Aorta (tissue), 5 donors: ENCODE measurements at regions of chr12 and their contacts with region 1.

Region 1: GRCh38 chr12:62006076-62006732 is 254.0 kb upstream of the USP15 start:
- DNase-seq: no peak
- ATAC-seq: no peak
- H3K4me3 ChIP-seq: no peak overlapping the region
- H3K27ac ChIP-seq: no peak overlapping the region
- H3K4me1 ChIP-seq: no peaks in the 10 kb centered on the region
- H3K27me3 ChIP-seq: no peaks in the 10 kb centered on the region

Region 2: DNA sequence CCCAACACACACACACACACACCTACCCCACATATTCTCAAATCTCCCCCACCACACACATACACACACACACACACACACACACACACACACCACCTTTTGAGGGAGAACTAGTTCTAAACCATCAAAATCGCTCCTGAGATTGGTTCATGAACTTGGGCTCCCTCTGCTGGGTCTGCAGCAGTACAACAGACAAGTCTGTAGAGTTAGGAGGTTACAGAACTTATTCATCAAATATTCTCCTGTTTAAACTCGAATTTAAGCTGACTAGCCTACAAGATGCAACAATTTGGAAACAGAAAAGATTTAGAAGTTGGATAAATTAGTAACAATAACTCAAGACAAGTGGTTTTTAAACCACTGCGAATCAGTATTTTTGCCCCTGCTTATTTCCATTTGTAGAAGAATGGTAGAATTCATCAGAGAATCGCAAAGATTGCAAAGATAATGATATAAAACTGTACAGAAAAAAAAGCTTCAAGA is 117.6 kb after region 1 on chr12:
- intact Hi-C with region 1: loop called in 1 of 2 experiments (anchors 10 kb)
- DNase-seq: peak in 1 of 2 donors; percentile 44
- ATAC-seq: peak; percentile 84
- H3K4me3 ChIP-seq: no peak overlapping the region
- H3K27ac ChIP-seq: no peak overlapping the region
- H3K4me1 ChIP-seq: no peaks in the 10 kb centered on the region
- H3K27me3 ChIP-seq: no peaks in the 10 kb centered on the region